Activated T-helper 2 cell treated with anti-CD3 and anti-CD28 coated beads, Interferon-gamma antibody, Interleukin-2, Interleukin-4, amounts not matched to agents 10 μg/mL and 5 μg/mL and 100 μg/mL, durations not matched to agents 14 hours and 24 hours and 36 hours (primary cell): ENCODE measurements at regions of chr4 and their contacts with region 1.

Region 1: DNA sequence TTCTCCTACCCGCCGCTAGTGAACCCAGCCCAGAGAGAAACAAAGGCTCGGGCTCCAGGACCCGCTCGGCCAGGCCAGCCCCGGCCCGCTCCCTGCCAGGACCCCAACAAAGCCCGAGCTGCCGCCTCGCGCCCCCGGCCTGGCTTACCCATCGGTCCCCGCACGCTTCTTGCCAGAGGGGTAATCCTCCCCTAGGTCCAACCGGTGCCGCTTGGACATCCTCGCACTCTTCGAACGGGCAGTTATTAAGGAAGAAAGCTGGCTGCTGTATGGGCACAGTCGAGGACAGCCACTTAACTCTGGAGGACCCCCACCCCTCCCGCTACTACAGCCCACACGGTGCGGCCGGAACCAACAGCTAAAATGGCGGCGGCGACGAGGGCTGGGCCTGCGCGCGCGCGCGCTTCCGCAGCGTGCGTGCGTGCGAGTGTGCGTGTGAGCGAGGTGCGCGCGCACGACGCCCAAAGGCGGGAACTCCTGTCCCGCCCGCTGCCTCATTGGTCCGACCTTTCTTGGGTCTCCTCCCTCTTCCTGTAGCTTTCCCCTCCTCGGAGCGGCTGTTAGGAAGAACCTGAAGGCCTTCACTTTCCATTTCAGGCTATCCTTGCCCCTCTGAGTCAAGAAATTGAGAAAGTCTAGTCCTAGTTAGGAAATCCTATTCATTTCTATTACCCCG is at the start of gene DHX15:
- DNase-seq: peak; percentile 89
- H3K4me3 Mint-ChIP-seq: peak within 1 kb of the TSS; percentile 99
- H3K27ac Mint-ChIP-seq: peak within 1 kb of the TSS; percentile 99
- H3K4me1 Mint-ChIP-seq: peaks cover 22% of the 10 kb centered on the region
- H3K27me3 Mint-ChIP-seq: no peaks in the 10 kb centered on the region
- total RNA-seq, gene DHX15: 233 and 239 TPM in 2 replicates

Region 2: GRCh38 chr4:24287096-24287495 is 297.2 kb before region 1 on chr4:
- intact Hi-C with region 1: no loop called
- DNase-seq: no peak
- H3K4me3 Mint-ChIP-seq: no peak overlapping the region
- H3K27ac Mint-ChIP-seq: no peak overlapping the region
- H3K4me1 Mint-ChIP-seq: no peaks in the 10 kb centered on the region
- H3K27me3 Mint-ChIP-seq: no peaks in the 10 kb centered on the region

Region 3: DNA sequence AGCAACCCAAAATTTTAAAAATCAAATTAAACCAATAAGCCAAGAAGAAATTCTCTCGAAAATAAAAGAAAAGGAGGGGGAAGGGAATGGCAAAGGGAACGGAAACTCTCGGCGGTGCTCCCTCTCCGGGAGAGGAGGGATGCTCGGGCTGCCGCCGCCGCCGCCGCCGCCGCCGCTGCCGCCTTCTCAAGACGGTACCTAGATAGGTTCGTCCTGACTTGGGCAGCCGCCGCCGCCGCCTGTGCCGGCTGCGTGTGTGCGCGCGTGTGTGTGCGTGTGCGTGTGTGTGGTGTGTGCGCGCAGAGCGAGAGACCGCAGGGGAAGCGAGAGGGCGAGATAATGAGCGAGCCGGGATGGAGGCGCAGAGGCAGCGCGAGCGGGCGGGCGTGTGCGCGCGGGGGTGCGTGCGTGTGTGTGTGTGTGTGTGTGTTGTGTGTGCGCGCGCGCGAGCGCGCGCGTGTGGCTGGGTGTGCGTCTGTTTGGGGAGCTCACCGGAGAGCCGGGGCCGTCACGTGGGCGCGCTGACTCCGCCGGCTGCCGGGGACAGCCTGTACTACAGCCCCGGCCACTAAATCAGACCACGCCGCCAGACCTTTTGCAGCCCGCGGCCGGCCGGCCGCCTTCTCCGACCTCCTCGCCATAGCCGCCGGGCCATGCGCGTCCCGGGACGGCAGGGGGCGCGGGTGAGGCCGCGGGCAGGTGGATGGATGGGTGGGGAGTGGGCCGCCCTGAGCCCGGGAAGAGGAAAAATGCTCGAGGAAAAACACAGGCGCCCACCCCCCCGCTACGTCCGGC is 111.6 kb before region 1 on chr4:
- intact Hi-C with region 1: loop called (anchors 2 kb)
- DNase-seq: peak; percentile 53
- H3K4me3 Mint-ChIP-seq: peak overlapping the region; percentile 96
- H3K27ac Mint-ChIP-seq: peak overlapping the region; percentile 57
- H3K4me1 Mint-ChIP-seq: peaks cover 31% of the 10 kb centered on the region
- H3K27me3 Mint-ChIP-seq: peaks cover 72% of the 10 kb centered on the region

Region 4: DNA sequence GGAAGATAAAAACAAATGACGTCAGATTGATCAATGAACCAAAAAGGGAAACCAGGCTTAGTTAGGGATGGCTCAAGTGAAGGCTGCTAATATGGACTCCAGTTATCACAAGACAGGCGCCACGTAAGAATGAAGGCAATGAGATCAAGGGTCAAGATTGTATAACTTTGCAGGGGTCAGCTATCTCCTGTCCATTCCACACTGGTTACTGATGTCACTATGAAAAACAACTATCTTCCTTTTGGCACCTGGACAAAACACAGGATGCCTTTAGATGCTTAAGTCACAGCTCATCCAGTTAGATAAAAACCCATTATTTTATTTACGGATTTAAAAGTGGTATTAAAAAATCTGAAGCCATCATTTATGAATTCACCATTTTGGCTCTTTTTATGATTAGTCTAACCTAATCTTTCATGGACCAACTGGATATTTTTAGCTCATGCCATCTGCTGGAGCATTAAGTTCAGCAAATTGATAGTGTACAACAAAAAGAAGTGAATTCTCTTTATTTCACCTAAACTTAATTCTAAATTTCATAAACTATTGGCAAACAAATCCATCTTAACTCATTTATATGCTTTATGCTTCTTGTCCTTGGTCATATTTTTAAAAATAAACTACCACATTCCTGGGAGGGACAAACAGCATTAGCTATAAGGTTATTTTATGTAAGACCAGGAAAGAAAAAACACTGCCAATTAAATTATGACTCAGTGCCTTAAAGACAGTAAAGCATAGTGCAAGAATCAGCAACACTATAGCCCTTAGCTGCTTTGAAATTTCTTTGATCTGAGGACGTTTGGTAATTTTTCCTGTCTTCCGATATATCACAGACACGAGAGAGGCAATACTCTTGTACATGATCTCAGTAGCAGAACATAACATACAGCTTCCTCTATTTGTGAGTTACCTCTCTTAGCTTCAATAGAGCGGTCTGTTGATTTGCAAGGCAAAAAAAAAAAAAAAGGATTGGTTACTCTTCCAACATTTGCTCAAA is 27.0 kb before region 1 on chr4:
- intact Hi-C with region 1: loop called (anchors 2 kb)
- DNase-seq: no peak
- H3K4me3 Mint-ChIP-seq: no peak overlapping the region
- H3K27ac Mint-ChIP-seq: peak overlapping the region; percentile 25
- H3K4me1 Mint-ChIP-seq: peaks cover 59% of the 10 kb centered on the region
- H3K27me3 Mint-ChIP-seq: no peaks in the 10 kb centered on the region

Region 5: GRCh38 chr4:24614881-24615280 is 30.6 kb after region 1 on chr4:
- intact Hi-C with region 1: no loop called
- DNase-seq: no peak
- H3K4me3 Mint-ChIP-seq: no peak overlapping the region
- H3K27ac Mint-ChIP-seq: no peak overlapping the region
- H3K4me1 Mint-ChIP-seq: peaks cover 9% of the 10 kb centered on the region
- H3K27me3 Mint-ChIP-seq: no peaks in the 10 kb centered on the region

Region 6: GRCh38 chr4:25159884-25160713 is 575.8 kb after region 1 on chr4 and contains the start of gene SEPSECS:
- intact Hi-C with region 1: loop called (anchors 2 kb)
- DNase-seq: peak; percentile 94
- H3K4me3 Mint-ChIP-seq: peak within 1 kb of the TSS; percentile 92
- H3K27ac Mint-ChIP-seq: peak within 1 kb of the TSS; percentile 90
- H3K4me1 Mint-ChIP-seq: peaks cover 32% of the 10 kb centered on the region
- H3K27me3 Mint-ChIP-seq: no peaks in the 10 kb centered on the region
- total RNA-seq, gene SEPSECS: 13.4 TPM in 2 replicates

Region 7: GRCh38 chr4:25312496-25313200 is 728.3 kb after region 1 on chr4 and contains the start of gene ZCCHC4:
- intact Hi-C with region 1: loop called (anchors 10 kb)
- DNase-seq: peak; percentile 87
- H3K4me3 Mint-ChIP-seq: peak within 1 kb of the TSS; percentile 99
- H3K27ac Mint-ChIP-seq: peak within 1 kb of the TSS; percentile 95
- H3K4me1 Mint-ChIP-seq: peaks cover 24% of the 10 kb centered on the region
- H3K27me3 Mint-ChIP-seq: no peaks in the 10 kb centered on the region
- total RNA-seq, gene ZCCHC4: 14.8 and 15.1 TPM in 2 replicates

Region 8: GRCh38 chr4:25862411-25863346 is 1278.4 kb after region 1 on chr4 and contains the start of gene SEL1L3:
- intact Hi-C with region 1: loop called (anchors 5 kb)
- DNase-seq: peak; percentile 37
- H3K4me3 Mint-ChIP-seq: peak within 1 kb of the TSS; percentile 100
- H3K27ac Mint-ChIP-seq: peak within 1 kb of the TSS; percentile 100
- H3K4me1 Mint-ChIP-seq: peaks cover 37% of the 10 kb centered on the region
- H3K27me3 Mint-ChIP-seq: no peaks in the 10 kb centered on the region
- total RNA-seq, gene SEL1L3: 44.0 and 49.2 TPM in 2 replicates